PC-3 (cell line): ENCODE measurements at regions of chr11 and their contacts with region 1.

Region 1: GRCh38 chr11:108593214-108593922 is at the start of gene EXPH5:
- DNase-seq: peak; percentile 99
- ATAC-seq: peak; percentile 94
- H3K4me3 ChIP-seq: peak within 1 kb of the TSS; percentile 88
- H3K27ac ChIP-seq: peak within 1 kb of the TSS; percentile 85
- H3K4me1 ChIP-seq: peaks cover 19% of the 10 kb centered on the region
- H3K27me3 ChIP-seq: no peaks in the 10 kb centered on the region
- CTCF ChIP-seq: peak; percentile 44; the same call in 1 of the 2 replicates
- total RNA-seq, gene EXPH5: 13.5 and 14.1 TPM in 2 replicates

Region 2: GRCh38 chr11:108222686-108223448 is 370.5 kb before region 1 on chr11 and contains the start of gene ATM:
- CTCF ChIA-PET with region 1: no interaction called
- POLR2A ChIA-PET with region 1: no interaction called
- intact Hi-C with region 1: loop called (anchors 5 kb)
- DNase-seq: peak; percentile 100
- ATAC-seq: peak; percentile 88
- H3K4me3 ChIP-seq: peak within 1 kb of the TSS; percentile 83
- H3K27ac ChIP-seq: peak within 1 kb of the TSS; percentile 77
- H3K4me1 ChIP-seq: peaks cover 47% of the 10 kb centered on the region
- H3K27me3 ChIP-seq: no peaks in the 10 kb centered on the region
- CTCF ChIP-seq: peak; percentile 86
- total RNA-seq, gene ATM: 40.2 and 55.3 TPM in 2 replicates

Region 3: DNA sequence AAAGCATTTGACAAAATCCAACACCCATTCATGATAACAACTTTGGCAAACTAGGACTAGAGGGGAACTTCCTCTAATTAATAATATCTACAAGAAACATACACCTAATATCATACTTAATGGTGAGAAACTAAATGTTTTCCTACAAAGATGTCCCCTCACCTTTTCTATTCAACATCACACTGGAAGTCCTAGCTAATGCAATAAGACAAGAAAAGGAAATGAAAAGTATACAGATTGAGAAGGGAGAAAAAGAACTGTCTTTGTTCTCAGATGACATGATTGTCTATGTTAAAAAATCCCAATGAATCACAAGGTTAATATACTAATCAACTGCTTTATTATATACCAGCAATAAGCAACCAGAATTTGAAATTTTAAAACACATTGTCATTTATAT is 178.4 kb before region 1 on chr11:
- CTCF ChIA-PET with region 1: no interaction called
- POLR2A ChIA-PET with region 1: no interaction called
- intact Hi-C with region 1: loop called (anchors 1 kb)
- DNase-seq: no peak
- ATAC-seq: no peak
- H3K4me3 ChIP-seq: no peak overlapping the region
- H3K27ac ChIP-seq: no peak overlapping the region
- H3K4me1 ChIP-seq: no peaks in the 10 kb centered on the region
- H3K27me3 ChIP-seq: no peaks in the 10 kb centered on the region
- CTCF ChIP-seq: no peak

Region 4: GRCh38 chr11:108467091-108467823 is 126.1 kb before region 1 on chr11 and contains the start of gene C11orf65:
- CTCF ChIA-PET with region 1: no interaction called
- POLR2A ChIA-PET with region 1: no interaction called
- intact Hi-C with region 1: loop called (anchors 1 kb)
- DNase-seq: peak; percentile 99
- ATAC-seq: peak; percentile 98
- H3K4me3 ChIP-seq: peak within 1 kb of the TSS; percentile 74
- H3K27ac ChIP-seq: peak within 1 kb of the TSS; percentile 86
- H3K4me1 ChIP-seq: peaks cover 6% of the 10 kb centered on the region; the same call in 1 of the 2 replicates
- H3K27me3 ChIP-seq: no peaks in the 10 kb centered on the region
- CTCF ChIP-seq: no peak
- total RNA-seq, gene C11orf65: 0.62 and 2.7 TPM in 2 replicates

Region 5: DNA sequence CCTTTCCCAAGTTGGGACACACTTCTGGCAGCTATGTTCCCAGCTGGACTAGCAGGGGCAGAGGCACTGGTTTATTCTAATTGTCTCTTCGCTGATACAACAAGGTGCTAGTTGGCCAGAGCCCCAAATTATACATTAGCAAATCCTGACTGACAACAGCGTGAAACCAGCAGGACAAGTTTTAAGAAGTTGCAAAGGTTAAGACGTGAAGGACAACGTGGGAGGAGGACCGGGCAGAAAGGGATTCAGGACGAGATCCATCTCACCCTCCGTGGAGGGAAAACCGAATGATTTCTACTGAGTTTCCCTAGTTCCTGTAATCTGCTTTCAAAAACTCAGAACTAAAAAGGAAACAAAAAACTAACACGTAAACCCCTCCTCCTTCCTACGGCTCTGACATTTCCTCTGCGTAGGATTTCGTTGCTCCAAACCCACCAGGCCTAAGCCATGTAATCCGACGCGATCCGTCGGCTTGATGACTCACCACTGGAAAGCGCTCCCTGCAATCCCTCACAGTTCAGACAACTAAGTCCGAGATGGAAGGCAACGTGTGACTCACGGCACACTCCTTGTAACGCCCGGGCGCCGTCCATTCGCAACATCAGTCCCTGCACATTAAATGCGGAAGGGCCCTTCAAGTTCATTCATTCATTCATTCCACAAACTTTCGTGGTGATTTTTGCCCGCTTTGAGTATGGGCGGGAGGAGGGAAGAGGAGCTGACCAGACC is 95.9 kb before region 1 on chr11:
- CTCF ChIA-PET with region 1: no interaction called
- POLR2A ChIA-PET with region 1: interaction called, 4 read pairs
- intact Hi-C with region 1: loop called (anchors 1 kb)
- DNase-seq: peak; percentile 99
- ATAC-seq: peak; percentile 92
- H3K4me3 ChIP-seq: peak overlapping the region; percentile 68
- H3K27ac ChIP-seq: peak overlapping the region; percentile 87
- H3K4me1 ChIP-seq: peaks cover 29% of the 10 kb centered on the region
- H3K27me3 ChIP-seq: no peaks in the 10 kb centered on the region
- CTCF ChIP-seq: no peak

Region 6: DNA sequence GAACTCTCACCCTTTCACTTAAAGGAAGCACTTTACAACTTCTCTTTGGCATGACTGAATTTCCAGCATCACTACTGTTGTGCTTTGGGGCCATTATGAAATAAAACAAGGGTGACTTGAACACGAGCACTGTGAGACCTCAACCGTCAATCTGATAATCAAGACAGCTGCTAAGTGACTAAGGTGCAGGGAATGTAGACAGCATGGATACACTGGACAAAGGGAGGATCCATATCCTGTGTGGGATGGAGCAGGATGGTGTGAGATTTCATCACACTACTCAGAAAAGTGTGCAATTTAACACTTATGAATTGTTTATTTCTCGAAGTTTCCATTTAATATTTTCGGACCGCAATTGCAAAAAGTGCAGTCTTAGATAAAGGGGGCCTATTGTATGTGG is 16.3 kb after region 1 on chr11:
- CTCF ChIA-PET with region 1: no interaction called
- POLR2A ChIA-PET with region 1: interaction called, 7 read pairs
- intact Hi-C with region 1: loop called (anchors 2 kb)
- DNase-seq: peak; percentile 66
- ATAC-seq: no peak
- H3K4me3 ChIP-seq: no peak overlapping the region
- H3K27ac ChIP-seq: no peak overlapping the region
- H3K4me1 ChIP-seq: peaks cover 33% of the 10 kb centered on the region
- H3K27me3 ChIP-seq: no peaks in the 10 kb centered on the region
- CTCF ChIP-seq: no peak

Region 7: GRCh38 chr11:108620958-108621772 is 27.8 kb after region 1 on chr11:
- CTCF ChIA-PET with region 1: no interaction called
- POLR2A ChIA-PET with region 1: interaction called, 5 read pairs
- intact Hi-C with region 1: loop called (anchors 1 kb)
- DNase-seq: peak; percentile 95
- ATAC-seq: peak; percentile 61
- H3K4me3 ChIP-seq: peak overlapping the region; percentile 31; the same call in 1 of the 2 replicates
- H3K27ac ChIP-seq: peak overlapping the region; percentile 88
- H3K4me1 ChIP-seq: peaks cover 60% of the 10 kb centered on the region
- H3K27me3 ChIP-seq: no peaks in the 10 kb centered on the region
- CTCF ChIP-seq: no peak